Naive thymus-derived CD4-positive, alpha-beta T cell (primary cell): ENCODE measurements at regions of chr10 and their contacts with region 1.

Region 1: GRCh38 chr10:74234569-74234968 is 83.5 kb downstream of the ADK start:
- DNase-seq: peak in 4 of 9 donors; percentile 12 to 29 (median 20)
- ATAC-seq: no peak
- H3K4me3 ChIP-seq: no peak overlapping the region
- H3K4me3 Mint-ChIP-seq: no peak overlapping the region
- H3K27ac ChIP-seq: no peak overlapping the region
- H3K27ac Mint-ChIP-seq: peak overlapping the region in 1 of 9 donors; percentile 26
- H3K4me1 ChIP-seq: no peaks in the 10 kb centered on the region
- H3K4me1 Mint-ChIP-seq: peaks cover 0 to 11% (median 0%) of the 10 kb centered on the region in 7 donors
- H3K27me3 ChIP-seq: no peaks in the 10 kb centered on the region
- H3K27me3 Mint-ChIP-seq: no peaks in the 10 kb centered on the region

Region 2: DNA sequence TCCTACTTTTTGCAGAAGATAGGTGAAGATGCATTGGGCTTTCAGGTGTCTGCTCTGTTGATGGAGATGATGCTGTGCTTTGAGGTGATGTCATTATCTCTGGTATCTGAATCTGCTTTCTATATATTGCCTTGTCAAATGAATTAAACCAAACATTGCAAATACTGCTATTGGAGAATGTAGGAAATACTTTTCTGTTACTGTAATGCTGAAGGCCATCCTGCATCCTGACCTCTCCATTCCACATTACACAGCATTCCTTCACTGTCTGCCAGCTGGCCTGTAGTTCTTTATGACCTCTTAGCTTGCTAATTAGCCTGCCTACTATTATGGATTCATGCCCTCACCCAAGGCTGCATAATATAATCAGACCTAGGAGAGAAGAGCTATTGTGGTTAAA is 163.4 kb before region 1 on chr10:
- CTCF ChIA-PET with region 1: no interaction called
- POLR2A ChIA-PET with region 1: no interaction called
- intact Hi-C with region 1: no loop called
- DNase-seq: no peak
- ATAC-seq: no peak
- H3K4me3 ChIP-seq: no peak overlapping the region
- H3K4me3 Mint-ChIP-seq: no peak overlapping the region
- H3K27ac ChIP-seq: no peak overlapping the region
- H3K27ac Mint-ChIP-seq: peak overlapping the region in 1 of 9 donors; percentile 49
- H3K4me1 ChIP-seq: no peaks in the 10 kb centered on the region
- H3K4me1 Mint-ChIP-seq: peaks cover 0 to 7% (median 0%) of the 10 kb centered on the region in 7 donors
- H3K27me3 ChIP-seq: no peaks in the 10 kb centered on the region
- H3K27me3 Mint-ChIP-seq: no peaks in the 10 kb centered on the region

Region 3: DNA sequence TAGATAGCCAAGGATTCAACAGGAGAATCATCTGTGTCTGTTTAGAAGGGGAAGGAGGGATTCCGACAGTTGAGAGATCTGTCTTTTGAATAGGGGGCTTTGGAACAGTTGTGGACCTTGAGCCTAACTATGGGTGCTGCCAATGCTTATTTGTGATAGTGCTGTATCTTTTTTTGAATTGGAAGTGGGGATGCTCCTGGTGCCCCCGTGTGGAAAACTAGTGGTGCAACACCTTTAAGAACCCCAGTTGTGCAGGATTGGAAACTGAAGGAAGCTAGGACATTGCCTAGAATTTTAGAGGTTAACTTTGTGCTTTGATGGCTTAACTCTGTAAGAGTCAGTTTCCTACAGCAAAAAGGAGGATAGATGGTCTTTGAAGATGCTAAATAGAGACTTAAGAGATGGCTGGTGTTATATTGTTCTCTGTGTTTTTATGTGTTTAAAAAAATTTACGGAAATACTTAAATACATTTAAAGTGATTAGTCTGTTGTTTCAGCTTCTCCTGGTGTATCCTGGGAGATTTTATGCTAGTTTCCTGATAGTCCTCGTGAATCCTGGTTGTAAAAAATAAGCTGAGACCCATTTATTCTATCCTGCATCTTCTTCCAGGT is 153.3 kb before region 1 on chr10:
- CTCF ChIA-PET with region 1: no interaction called
- POLR2A ChIA-PET with region 1: no interaction called
- intact Hi-C with region 1: loop called in 1 of 2 experiments (anchors 1 kb)
- DNase-seq: peak in 7 of 9 donors; percentile 14 to 51 (median 41)
- ATAC-seq: peak; percentile 71
- H3K4me3 ChIP-seq: no peak overlapping the region
- H3K4me3 Mint-ChIP-seq: no peak overlapping the region
- H3K27ac ChIP-seq: no peak overlapping the region
- H3K27ac Mint-ChIP-seq: no peak overlapping the region
- H3K4me1 ChIP-seq: peaks cover 0 to 15% of the 10 kb centered on the region in 2 donors
- H3K4me1 Mint-ChIP-seq: peaks cover 0 to 40% (median 6%) of the 10 kb centered on the region in 7 donors
- H3K27me3 ChIP-seq: no peaks in the 10 kb centered on the region
- H3K27me3 Mint-ChIP-seq: no peaks in the 10 kb centered on the region

Region 4: GRCh38 chr10:74120911-74121310 is 113.7 kb before region 1 on chr10:
- CTCF ChIA-PET with region 1: interaction called, 6 read pairs
- POLR2A ChIA-PET with region 1: no interaction called
- intact Hi-C with region 1: loop called (anchors 2 to 5 kb)
- DNase-seq: no peak
- ATAC-seq: no peak
- H3K4me3 ChIP-seq: no peak overlapping the region
- H3K4me3 Mint-ChIP-seq: no peak overlapping the region
- H3K27ac ChIP-seq: no peak overlapping the region
- H3K27ac Mint-ChIP-seq: peak overlapping the region in 3 of 9 donors; percentile 28 to 61 (median 36)
- H3K4me1 ChIP-seq: no peaks in the 10 kb centered on the region
- H3K4me1 Mint-ChIP-seq: peaks cover 0 to 12% (median 5%) of the 10 kb centered on the region in 7 donors
- H3K27me3 ChIP-seq: no peaks in the 10 kb centered on the region
- H3K27me3 Mint-ChIP-seq: no peaks in the 10 kb centered on the region

Region 5: GRCh38 chr10:74213571-74214162 is 20.9 kb before region 1 on chr10:
- CTCF ChIA-PET with region 1: interaction called, 24 read pairs
- POLR2A ChIA-PET with region 1: no interaction called
- intact Hi-C with region 1: loop called in 1 of 2 experiments (anchors 1 kb)
- DNase-seq: peak in 7 of 9 donors; percentile 26 to 60 (median 42)
- ATAC-seq: peak; percentile 78
- H3K4me3 ChIP-seq: no peak overlapping the region
- H3K4me3 Mint-ChIP-seq: no peak overlapping the region
- H3K27ac ChIP-seq: no peak overlapping the region
- H3K27ac Mint-ChIP-seq: peak overlapping the region in 1 of 9 donors; percentile 0
- H3K4me1 ChIP-seq: no peaks in the 10 kb centered on the region
- H3K4me1 Mint-ChIP-seq: peaks cover 7 to 16% (median 12%) of the 10 kb centered on the region in 7 donors
- H3K27me3 ChIP-seq: no peaks in the 10 kb centered on the region
- H3K27me3 Mint-ChIP-seq: no peaks in the 10 kb centered on the region